ENCODE measurements at regions of chr2 and their contacts with region 1.

Region 1: GRCh38 chr2:96116879-96117697 is 717 bp upstream of the ADRA2B start:
- DNase-seq: peak; percentile 69
- H3K4me3 Mint-ChIP-seq: peak overlapping the region; percentile 39
- H3K27ac Mint-ChIP-seq: no peak overlapping the region
- H3K4me1 Mint-ChIP-seq: peaks cover 13% of the 10 kb centered on the region
- H3K27me3 Mint-ChIP-seq: peaks cover 41% of the 10 kb centered on the region

Region 2: DNA sequence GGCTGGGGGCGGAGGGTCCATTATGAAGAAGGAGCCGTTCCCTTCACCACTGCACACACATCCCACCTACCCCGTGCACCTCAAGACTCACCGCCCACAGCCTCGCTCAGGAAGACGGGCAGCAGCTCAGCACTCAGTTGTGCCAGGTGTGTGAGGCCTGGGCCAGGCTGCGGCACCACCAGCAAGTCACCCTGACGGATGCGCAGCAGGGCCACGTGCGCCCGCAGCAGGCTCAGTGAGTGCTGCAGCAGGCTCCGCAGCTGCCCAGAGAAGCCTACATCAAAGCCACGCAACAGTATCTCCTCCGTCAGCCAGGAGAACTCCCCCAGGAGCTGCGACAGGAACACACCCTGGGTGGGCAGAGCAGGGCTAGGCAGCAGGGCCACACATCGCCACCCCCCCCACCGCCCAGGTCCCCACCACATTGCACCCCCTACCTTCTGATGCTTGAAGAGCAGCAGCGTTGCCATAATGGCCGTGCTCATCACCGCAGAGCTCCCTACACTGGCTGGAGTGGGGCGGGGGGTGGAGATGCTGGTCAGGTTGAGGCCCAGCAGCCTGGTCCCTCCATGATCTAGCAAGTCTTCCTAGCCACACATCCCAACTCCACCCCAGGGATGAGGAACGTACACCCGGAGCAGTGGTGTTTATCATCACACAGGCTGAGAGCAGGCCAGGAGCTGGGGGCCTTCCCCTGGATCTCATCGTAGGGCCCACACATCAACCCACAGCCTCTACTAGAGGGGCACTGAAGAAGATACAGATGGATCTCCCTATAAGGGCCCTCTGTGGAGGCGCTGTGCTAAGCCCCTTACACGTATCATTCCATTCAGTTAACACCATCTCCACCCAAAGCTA is 92.5 kb before region 1 on chr2:
- CTCF ChIA-PET with region 1: interaction called, 30 read pairs
- POLR2A ChIA-PET with region 1: no interaction called
- intact Hi-C with region 1: no loop called
- DNase-seq: no peak
- H3K4me3 Mint-ChIP-seq: no peak overlapping the region
- H3K27ac Mint-ChIP-seq: no peak overlapping the region
- H3K4me1 Mint-ChIP-seq: peaks cover 2% of the 10 kb centered on the region
- H3K27me3 Mint-ChIP-seq: no peaks in the 10 kb centered on the region

Region 3: DNA sequence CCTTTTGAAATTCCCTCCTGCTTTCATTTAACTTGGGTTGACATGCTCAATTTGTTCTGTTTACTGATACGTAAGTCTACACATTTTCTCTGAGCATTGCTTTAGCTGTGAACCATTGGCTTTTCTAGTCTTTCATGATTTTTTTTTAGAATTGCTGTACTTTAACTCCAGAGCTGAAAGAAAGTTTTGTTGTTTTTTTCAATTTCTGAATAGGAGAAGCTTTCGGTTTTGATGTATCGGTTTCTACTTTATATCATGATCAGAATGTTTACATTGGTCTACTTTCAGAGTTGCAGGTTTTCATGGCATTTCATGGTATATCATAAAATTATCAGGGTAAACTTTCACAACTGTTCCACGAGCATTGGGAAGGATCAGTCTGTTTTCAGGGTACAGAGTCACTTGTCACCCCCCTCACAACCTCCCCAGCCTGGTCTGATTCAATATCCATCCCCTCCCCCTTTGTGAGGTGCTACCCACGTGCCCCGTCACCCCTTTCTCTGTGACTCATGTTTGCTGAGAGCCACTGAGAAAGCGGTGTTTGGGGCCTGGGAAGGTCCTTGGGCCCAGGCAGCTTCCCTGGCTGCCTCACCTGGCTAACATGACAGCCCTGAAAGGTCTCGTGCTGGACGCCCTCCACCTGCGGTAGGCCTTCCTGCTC is 14.2 kb after region 1 on chr2:
- CTCF ChIA-PET with region 1: interaction called, 14 read pairs
- POLR2A ChIA-PET with region 1: interaction called, 3 read pairs
- intact Hi-C with region 1: no loop called
- DNase-seq: peak; percentile 78
- H3K4me3 Mint-ChIP-seq: peak overlapping the region; percentile 30
- H3K27ac Mint-ChIP-seq: peak overlapping the region; percentile 79
- H3K4me1 Mint-ChIP-seq: peaks cover 20% of the 10 kb centered on the region
- H3K27me3 Mint-ChIP-seq: no peaks in the 10 kb centered on the region

Region 4: GRCh38 chr2:96138179-96139145 is 21.4 kb after region 1 on chr2 and contains the start of gene ASTL:
- CTCF ChIA-PET with region 1: interaction called, 47 read pairs
- POLR2A ChIA-PET with region 1: no interaction called
- intact Hi-C with region 1: no loop called
- DNase-seq: peak; percentile 75
- H3K4me3 Mint-ChIP-seq: no peak within 1 kb of the TSS
- H3K27ac Mint-ChIP-seq: peak within 1 kb of the TSS; percentile 23
- H3K4me1 Mint-ChIP-seq: peaks cover 32% of the 10 kb centered on the region
- H3K27me3 Mint-ChIP-seq: no peaks in the 10 kb centered on the region
- total RNA-seq, gene ASTL: 1.8 to 2.4 TPM

Region 5: GRCh38 chr2:96157651-96158553 is 40.8 kb after region 1 on chr2:
- CTCF ChIA-PET with region 1: interaction called, 18 read pairs
- POLR2A ChIA-PET with region 1: interaction called, 4 read pairs
- intact Hi-C with region 1: no loop called
- DNase-seq: peak; percentile 99
- H3K4me3 Mint-ChIP-seq: peak overlapping the region; percentile 62
- H3K27ac Mint-ChIP-seq: peak overlapping the region; percentile 96
- H3K4me1 Mint-ChIP-seq: peaks cover 82% of the 10 kb centered on the region
- H3K27me3 Mint-ChIP-seq: no peaks in the 10 kb centered on the region

Region 6: GRCh38 chr2:96202152-96202854 is 85.2 kb after region 1 on chr2:
- CTCF ChIA-PET with region 1: interaction called, 15 read pairs
- POLR2A ChIA-PET with region 1: no interaction called
- intact Hi-C with region 1: no loop called
- DNase-seq: no peak
- H3K4me3 Mint-ChIP-seq: no peak overlapping the region
- H3K27ac Mint-ChIP-seq: peak overlapping the region; percentile 13
- H3K4me1 Mint-ChIP-seq: peaks cover 82% of the 10 kb centered on the region
- H3K27me3 Mint-ChIP-seq: no peaks in the 10 kb centered on the region